ENCODE measurements at regions of chr22 and their contacts with region 1.

Region 1: DNA sequence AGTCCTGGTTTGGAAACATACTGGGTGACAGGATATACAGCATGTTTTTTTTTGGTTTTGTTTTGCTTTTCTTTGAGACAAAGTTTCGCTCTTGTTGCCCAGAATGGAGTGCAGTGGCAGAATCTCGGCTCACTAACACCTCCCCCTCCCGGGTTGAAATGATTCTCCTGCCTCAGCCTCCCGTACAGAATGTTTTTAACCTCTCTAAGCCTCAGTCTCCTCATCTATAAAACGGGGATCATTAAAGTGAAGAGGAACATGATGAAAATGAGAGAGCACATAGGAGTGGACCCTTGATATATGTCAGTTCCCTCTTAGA is 28.1 kb upstream of the SCARF2 start:
- DNase-seq: no peak
- H3K4me3 ChIP-seq: no peak overlapping the region
- H3K27ac ChIP-seq: no peak overlapping the region
- H3K4me1 ChIP-seq: no peaks in the 10 kb centered on the region
- H3K27me3 ChIP-seq: no peaks in the 10 kb centered on the region
- CTCF ChIP-seq: no peak

Region 2: DNA sequence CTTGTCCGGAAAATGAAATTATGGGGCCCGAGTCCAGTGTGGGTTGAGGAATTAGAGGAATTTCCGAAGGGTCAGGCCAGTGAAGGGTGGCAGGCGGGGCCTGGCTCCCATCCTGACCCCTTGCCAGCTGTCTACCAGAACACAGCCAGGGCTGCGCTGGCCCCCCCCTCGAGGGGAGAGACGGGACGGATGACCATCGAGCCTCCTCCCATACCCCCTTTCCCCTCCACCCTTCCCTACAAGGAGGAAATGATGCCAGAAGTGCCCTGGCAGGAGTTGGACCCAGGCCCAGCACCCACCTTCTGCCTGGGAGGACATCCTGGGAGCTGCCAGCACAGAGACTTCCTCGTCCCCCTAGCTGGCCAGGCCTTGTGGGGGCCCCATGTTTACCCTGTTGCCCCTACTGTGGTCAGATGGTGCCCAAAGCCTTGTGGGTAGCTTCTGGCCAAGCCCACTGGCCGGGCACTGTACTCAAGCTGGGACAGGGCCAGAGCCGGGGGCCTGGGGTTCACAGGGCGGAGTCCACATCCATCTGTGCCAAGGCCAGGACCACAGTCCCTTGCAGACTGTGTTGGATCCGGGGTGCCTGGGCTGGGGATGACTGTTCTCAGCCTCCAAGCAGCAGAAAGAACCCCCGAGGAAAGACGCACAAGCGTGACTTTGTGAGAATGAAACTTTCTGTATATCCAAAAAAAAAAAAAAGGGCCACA is 469.9 kb before region 1 on chr22:
- intact Hi-C with region 1: no loop called
- DNase-seq: peak in 1 of 2 donors; percentile 94
- H3K4me3 ChIP-seq: peak overlapping the region in 1 of 2 donors; percentile 12
- H3K27ac ChIP-seq: peak overlapping the region; percentile 88 to 95
- H3K4me1 ChIP-seq: peaks cover 36 to 75% of the 10 kb centered on the region in 2 donors
- H3K27me3 ChIP-seq: no peaks in the 10 kb centered on the region
- CTCF ChIP-seq: no peak

Region 3: GRCh38 chr22:20027966-20028854 is 437.5 kb before region 1 on chr22:
- intact Hi-C with region 1: no loop called
- DNase-seq: no peak
- H3K4me3 ChIP-seq: no peak overlapping the region
- H3K27ac ChIP-seq: no peak overlapping the region
- H3K4me1 ChIP-seq: peaks cover 5 to 24% of the 10 kb centered on the region in 2 donors
- H3K27me3 ChIP-seq: no peaks in the 10 kb centered on the region
- CTCF ChIP-seq: peak in 1 of 3 experiments; percentile 8

Region 4: DNA sequence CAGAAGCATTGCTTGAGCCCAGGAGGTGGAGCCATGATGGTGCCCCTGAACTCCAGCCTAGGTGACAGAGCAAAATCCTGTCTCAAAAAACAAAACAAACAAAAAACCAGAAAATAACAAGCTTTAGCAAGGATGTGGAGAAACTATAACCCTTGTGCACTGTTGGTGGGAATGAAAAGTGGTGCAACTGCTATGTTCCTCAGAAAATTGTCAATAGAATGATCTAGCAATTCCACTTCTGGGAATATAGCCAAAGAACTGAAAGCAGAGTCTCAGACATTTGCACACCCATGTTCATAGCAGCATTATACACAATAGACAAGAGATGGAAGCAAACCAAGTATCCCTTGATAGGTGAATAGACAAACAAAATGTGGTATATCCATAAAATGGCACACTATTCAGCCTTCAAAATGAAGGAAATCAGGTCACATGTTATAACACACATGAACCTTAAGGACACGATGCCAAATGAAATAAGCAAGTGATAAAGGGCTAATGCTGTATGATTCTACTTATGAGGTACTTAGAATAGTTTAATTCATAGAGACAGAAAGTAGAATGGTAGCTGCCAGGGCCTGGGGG is 14.0 kb after region 1 on chr22:
- intact Hi-C with region 1: loop called (anchors 1 kb)
- DNase-seq: no peak
- H3K4me3 ChIP-seq: no peak overlapping the region
- H3K27ac ChIP-seq: no peak overlapping the region
- H3K4me1 ChIP-seq: no peaks in the 10 kb centered on the region
- H3K27me3 ChIP-seq: no peaks in the 10 kb centered on the region
- CTCF ChIP-seq: no peak